ENCODE measurements at regions of chr4 and their contacts with region 1.

Region 1: DNA sequence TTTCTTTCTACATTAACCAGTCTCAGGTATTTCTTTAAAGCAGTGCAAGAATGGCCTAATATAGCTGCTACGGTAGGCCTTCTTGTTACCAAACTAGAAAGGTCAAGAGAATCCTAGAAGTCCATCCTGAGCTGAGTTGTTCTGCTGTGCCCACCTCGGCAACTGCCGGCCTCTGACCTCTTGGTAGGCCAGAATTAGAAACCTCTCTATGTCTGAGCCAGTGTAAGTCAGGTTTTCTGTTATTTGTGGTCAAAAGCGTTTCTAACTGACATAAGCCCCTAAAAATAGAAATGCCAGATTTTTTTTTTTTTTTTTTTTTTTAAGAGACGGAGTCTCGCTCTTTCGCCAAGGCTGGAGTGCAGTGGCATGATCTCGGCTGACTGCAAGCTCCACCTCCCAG is 43.1 kb downstream of the SOWAHB start:
- DNase-seq: no peak
- H3K4me3 ChIP-seq: no peak overlapping the region
- H3K27ac ChIP-seq: no peak overlapping the region
- H3K27me3 ChIP-seq: no peaks in the 10 kb centered on the region
- CTCF ChIP-seq: no peak

Region 2: GRCh38 chr4:76305971-76306881 is 548.6 kb before region 1 on chr4 and contains the start of gene STBD1:
- intact Hi-C with region 1: no loop called
- DNase-seq: peak in 7 of 10 donors; percentile 8 to 67 (median 48)
- H3K4me3 ChIP-seq: peak within 1 kb of the TSS; percentile 56 to 92 (median 80)
- H3K27ac ChIP-seq: peak within 1 kb of the TSS in 49 of 59 donors; percentile 5 to 86 (median 54)
- H3K27me3 ChIP-seq: no peaks in the 10 kb centered on the region
- CTCF ChIP-seq: peak in 4 of 56 donors; percentile 2 to 13 (median 9)
- total RNA-seq, gene STBD1: 1.1 to 7.0 (median 3.3) TPM

Region 3: DNA sequence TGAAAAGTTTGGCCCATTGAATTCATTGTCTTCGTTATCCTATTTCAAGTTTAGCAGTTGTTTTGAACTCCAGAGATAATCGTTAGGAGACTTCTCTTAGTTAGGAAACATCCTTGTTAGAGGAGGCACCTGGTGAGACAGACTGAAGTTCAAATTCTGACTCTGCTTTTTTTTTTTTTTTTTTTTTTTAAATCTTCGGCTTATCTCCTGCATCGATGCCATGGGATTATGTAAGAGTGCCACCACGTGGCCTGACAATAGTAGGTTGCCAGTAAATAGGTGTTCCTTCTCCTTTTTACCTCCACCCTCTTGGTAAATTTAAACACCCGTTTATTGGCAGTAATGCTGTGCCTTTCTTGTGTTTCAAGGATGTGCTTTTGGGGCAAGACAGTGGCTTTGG is 106.2 kb before region 1 on chr4:
- intact Hi-C with region 1: no loop called
- DNase-seq: peak in 2 of 10 donors; percentile 48 to 57
- H3K4me3 ChIP-seq: no peak overlapping the region
- H3K27ac ChIP-seq: no peak overlapping the region
- H3K27me3 ChIP-seq: peaks cover 0 to 6% (median 0%) of the 10 kb centered on the region in 45 donors
- CTCF ChIP-seq: peak in 29 of 56 donors; percentile 6 to 56 (median 27)

Region 4: DNA sequence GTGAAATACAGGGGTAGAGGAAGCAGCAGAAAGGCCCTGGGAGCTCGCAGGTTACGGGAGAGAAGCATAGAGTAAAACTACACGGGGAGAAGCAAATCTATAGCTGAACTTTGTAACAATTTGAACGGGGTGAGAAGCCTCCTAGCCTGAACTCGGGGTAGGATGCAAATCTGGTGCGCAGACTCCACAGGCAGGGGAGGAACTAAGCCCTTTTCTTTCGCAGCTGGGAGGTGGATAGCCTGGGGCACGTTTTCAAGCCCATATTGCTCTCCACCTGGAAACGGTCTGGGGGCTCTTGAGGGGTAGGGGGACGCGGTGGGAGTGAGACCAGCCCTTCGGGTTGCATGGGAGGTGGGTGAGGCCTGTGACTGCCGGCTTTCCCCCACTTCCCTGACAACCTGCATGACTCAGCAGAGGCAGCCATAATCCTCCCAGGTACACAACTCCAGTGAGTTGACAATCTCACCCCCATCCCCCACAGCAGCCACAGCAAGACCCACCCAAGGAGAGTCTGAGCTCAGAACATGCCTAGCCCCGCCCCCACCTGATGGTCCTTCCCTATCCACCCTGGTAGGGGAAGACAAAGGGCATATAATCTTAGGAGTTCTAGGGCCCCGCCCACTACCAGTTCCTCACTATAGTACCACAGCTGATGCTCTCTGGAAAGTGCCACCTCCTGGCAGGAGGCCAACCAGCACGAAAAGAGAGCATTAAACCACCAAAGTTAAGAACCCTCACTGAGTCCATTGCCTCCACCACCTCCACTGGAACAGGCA is 13.2 kb after region 1 on chr4:
- intact Hi-C with region 1: loop called in 1 of 2 experiments (anchors 1 kb)
- DNase-seq: no peak
- H3K4me3 ChIP-seq: no peak overlapping the region
- H3K27ac ChIP-seq: no peak overlapping the region
- H3K27me3 ChIP-seq: no peaks in the 10 kb centered on the region
- CTCF ChIP-seq: no peak